Caco-2 (cell line): ENCODE measurements at regions of chr6 and their contacts with region 1.

Region 1: DNA sequence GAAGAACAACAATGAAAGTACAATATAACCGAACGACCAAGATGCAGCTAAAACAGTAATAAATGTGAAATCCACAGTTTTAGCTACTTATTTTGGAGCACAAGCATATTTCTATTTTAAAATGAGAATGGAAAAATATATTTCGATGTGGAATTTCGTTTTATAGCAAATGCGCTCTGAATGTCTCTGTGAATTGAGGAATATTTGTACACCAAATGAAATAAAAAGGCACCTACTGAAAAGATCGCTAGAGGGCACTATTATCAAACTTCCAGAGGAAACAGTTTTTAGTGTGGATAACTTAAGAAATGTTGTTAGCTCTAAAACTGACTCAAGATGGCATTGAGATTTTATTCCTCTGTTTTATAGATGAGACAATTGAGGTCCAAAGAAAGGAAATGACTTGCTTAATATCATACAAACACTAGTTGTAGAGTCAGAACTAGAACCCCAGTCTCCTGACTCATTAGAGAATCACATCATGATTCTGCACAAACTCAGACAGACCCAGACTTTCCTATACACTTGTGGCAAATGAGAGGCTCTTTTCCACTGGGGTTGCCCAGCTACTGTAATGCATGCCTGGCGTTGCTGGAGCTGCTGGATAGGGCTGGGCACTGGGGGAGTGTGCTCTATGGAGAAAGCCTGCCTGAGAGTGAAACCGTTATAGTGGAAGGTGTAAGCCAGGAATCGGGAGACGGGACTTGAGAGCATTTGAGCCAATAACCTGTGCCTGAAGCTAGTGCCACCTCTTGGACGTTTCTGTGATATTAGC is 51.9 kb downstream of the GCLC start:
- DNase-seq: peak; percentile 34 to 50
- H3K4me3 ChIP-seq: no peak overlapping the region
- H3K4me3 Mint-ChIP-seq: no peak overlapping the region
- H3K27ac Mint-ChIP-seq: no peak overlapping the region
- H3K4me1 ChIP-seq: no peaks in the 10 kb centered on the region
- H3K4me1 Mint-ChIP-seq: peaks cover under 1% of the 10 kb centered on the region
- H3K27me3 ChIP-seq: no peaks in the 10 kb centered on the region
- H3K27me3 Mint-ChIP-seq: no peaks in the 10 kb centered on the region
- CTCF ChIP-seq: peak; percentile 48 to 65

Region 2: GRCh38 chr6:53544470-53545308 is 51.6 kb after region 1 on chr6 and contains the start of gene GCLC:
- CTCF ChIA-PET with region 1: interaction called, 3 read pairs
- POLR2A ChIA-PET with region 1: no interaction called
- intact Hi-C with region 1: loop called (anchors 5 kb)
- DNase-seq: peak; percentile 93 to 94
- H3K4me3 ChIP-seq: peak within 1 kb of the TSS; percentile 98
- H3K4me3 Mint-ChIP-seq: peak within 1 kb of the TSS; percentile 98
- H3K27ac Mint-ChIP-seq: peak within 1 kb of the TSS; percentile 94
- H3K4me1 ChIP-seq: peaks cover 14% of the 10 kb centered on the region
- H3K4me1 Mint-ChIP-seq: peaks cover 19% of the 10 kb centered on the region
- H3K27me3 ChIP-seq: no peaks in the 10 kb centered on the region
- H3K27me3 Mint-ChIP-seq: no peaks in the 10 kb centered on the region
- CTCF ChIP-seq: peak; percentile 42 to 75
- total RNA-seq, gene GCLC: 70.1 and 88.9 TPM in 2 replicates

Region 3: GRCh38 chr6:53679446-53679933 is 186.4 kb after region 1 on chr6:
- CTCF ChIA-PET with region 1: interaction called, 18 read pairs
- POLR2A ChIA-PET with region 1: no interaction called
- intact Hi-C with region 1: loop called (anchors 1 kb)
- DNase-seq: peak in 1 of 2 experiments; percentile 41
- H3K4me3 ChIP-seq: no peak overlapping the region
- H3K4me3 Mint-ChIP-seq: no peak overlapping the region
- H3K27ac Mint-ChIP-seq: peak overlapping the region; percentile 39
- H3K4me1 ChIP-seq: no peaks in the 10 kb centered on the region
- H3K4me1 Mint-ChIP-seq: no peaks in the 10 kb centered on the region
- H3K27me3 ChIP-seq: no peaks in the 10 kb centered on the region
- H3K27me3 Mint-ChIP-seq: no peaks in the 10 kb centered on the region
- CTCF ChIP-seq: peak; percentile 40 to 57

Region 4: DNA sequence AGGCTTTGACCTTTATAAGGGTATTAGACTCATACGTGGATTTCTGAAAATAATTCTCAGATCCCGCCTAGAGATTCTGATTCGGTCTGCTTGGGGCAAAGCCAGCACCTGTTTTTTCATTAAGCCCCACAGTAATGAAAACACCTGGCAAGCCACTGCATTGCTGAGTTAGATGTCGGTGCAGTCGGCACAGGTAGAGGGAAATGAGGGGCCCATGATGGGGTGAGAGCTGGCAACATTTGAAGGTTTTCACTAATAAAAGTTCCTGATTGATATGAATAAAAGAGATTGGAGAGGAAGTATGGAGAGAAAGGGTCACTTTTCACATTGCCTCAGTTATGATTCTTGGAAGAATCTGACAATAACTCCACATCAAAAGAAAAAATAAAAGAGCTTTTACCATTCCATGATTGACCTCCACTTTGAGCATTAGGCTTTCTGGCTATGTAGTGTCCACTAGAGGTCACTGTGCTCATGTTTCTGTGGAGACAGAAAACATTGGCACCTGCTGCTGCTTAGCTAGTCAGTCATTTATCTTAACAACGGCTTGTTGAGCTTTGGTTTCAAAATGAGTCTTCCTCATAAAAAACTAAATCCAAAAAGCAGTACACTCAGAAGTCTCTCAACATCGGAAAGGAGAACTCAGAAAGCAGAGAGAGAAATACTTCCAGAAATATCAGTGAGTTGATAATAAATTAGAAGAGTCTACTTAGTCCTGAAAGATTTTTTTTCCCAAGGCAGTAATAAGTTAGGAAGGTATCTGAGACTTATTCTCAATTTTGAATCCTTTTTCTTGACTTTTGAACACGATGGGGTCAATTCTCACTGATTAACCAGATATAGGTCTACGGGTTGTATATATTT is 225.8 kb after region 1 on chr6:
- CTCF ChIA-PET with region 1: interaction called, 19 read pairs
- POLR2A ChIA-PET with region 1: no interaction called
- intact Hi-C with region 1: no loop called
- DNase-seq: peak; percentile 59 to 68
- H3K4me3 ChIP-seq: no peak overlapping the region
- H3K4me3 Mint-ChIP-seq: peak overlapping the region; percentile 28
- H3K27ac Mint-ChIP-seq: no peak overlapping the region
- H3K4me1 ChIP-seq: peaks cover 17% of the 10 kb centered on the region
- H3K4me1 Mint-ChIP-seq: peaks cover 22% of the 10 kb centered on the region
- H3K27me3 ChIP-seq: no peaks in the 10 kb centered on the region
- H3K27me3 Mint-ChIP-seq: no peaks in the 10 kb centered on the region
- CTCF ChIP-seq: peak; percentile 67 to 78

Region 5: DNA sequence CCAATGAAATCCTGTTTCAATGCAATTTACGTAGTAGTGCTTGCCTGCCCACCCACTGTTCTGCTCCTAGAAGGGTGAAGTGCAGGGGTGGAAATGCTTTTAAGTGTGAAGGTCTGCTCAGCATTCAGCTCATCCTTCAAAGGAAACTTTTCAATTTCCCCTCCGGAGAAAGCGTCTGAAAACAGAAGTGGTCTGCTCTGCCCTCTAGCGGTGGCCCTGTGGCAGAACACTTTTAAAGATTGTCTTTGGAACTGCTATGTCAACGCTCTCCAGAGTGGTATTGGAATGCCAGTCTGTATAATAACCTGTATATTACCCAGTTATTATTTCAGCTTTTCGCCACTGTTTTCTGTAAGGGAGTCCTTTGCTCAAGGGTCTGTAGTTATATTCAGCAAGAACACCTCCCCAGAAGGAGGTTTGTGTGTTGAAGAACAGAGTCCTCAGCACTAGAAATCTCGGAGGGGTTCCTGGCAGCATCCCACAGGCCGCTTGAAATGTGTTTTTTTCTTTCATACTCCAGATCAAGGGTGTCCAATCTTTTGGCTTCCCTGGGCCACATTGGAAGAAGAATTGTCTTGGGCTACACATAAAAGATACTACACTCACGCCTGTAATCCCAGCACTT is 235.6 kb after region 1 on chr6:
- CTCF ChIA-PET with region 1: interaction called, 14 read pairs
- POLR2A ChIA-PET with region 1: no interaction called
- intact Hi-C with region 1: loop called (anchors 1 kb)
- DNase-seq: peak in 1 of 2 experiments; percentile 52
- H3K4me3 ChIP-seq: no peak overlapping the region
- H3K4me3 Mint-ChIP-seq: no peak overlapping the region
- H3K27ac Mint-ChIP-seq: peak overlapping the region; percentile 49
- H3K4me1 ChIP-seq: peaks cover 58% of the 10 kb centered on the region
- H3K4me1 Mint-ChIP-seq: peaks cover 45% of the 10 kb centered on the region
- H3K27me3 ChIP-seq: no peaks in the 10 kb centered on the region
- H3K27me3 Mint-ChIP-seq: no peaks in the 10 kb centered on the region
- CTCF ChIP-seq: peak; percentile 69 to 75